PC-3 (cell line): ENCODE measurements at regions of chr4 and their contacts with region 1.

Region 1: DNA sequence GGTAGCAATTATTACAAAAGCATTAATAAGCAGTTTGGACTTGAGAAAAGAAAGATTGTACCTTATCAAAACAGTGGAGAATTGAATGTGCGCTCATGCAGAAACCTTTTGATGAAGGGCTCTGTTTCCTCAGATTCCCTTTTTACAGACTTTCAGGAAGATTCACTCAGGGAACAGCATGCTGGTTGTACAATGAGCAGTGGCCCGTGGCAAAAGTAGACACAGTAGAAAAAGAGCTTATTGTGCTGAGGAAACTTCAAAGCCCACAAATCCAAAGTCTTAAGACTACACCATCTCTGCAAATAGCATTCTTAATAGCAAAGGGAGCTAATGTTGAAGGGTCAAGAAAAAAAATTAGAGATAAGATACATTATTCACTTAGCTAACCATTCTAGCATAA is 858.9 kb downstream of the PDHA2 start:
- DNase-seq: no peak
- ATAC-seq: no peak
- H3K4me3 ChIP-seq: no peak overlapping the region
- H3K27ac ChIP-seq: no peak overlapping the region
- H3K4me1 ChIP-seq: no peaks in the 10 kb centered on the region
- H3K27me3 ChIP-seq: no peaks in the 10 kb centered on the region
- CTCF ChIP-seq: no peak

Region 2: DNA sequence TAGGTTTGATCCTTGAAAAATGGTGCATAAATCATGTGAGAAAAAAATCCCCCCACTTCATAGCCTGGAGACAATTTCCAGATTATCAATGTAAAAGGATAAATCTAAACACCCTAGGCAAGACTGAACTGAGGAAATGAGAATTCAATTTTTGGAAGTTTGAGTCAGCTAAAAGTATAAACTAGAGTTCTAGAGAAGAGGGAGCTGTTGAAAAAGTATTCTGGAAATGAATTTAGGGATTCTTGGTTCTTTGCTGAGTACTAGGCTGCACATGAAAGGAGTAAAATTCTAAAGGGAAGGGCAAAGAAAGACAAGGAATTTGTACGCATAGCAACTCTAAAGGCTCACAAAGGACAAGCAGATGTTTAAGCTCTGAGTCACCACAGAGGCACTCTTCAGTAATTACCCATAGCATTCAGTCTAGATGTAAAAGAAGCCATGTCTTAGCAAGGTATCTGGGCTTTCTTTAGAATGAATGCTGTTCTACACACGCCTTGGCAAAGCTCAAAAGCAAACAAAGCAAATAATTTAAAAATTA is 37.6 kb after region 1 on chr4:
- CTCF ChIA-PET with region 1: no interaction called
- POLR2A ChIA-PET with region 1: no interaction called
- intact Hi-C with region 1: no loop called
- DNase-seq: peak; percentile 62
- ATAC-seq: peak; percentile 97
- H3K4me3 ChIP-seq: no peak overlapping the region
- H3K27ac ChIP-seq: no peak overlapping the region
- H3K4me1 ChIP-seq: peaks cover 4% of the 10 kb centered on the region
- H3K27me3 ChIP-seq: no peaks in the 10 kb centered on the region
- CTCF ChIP-seq: no peak

Region 3: DNA sequence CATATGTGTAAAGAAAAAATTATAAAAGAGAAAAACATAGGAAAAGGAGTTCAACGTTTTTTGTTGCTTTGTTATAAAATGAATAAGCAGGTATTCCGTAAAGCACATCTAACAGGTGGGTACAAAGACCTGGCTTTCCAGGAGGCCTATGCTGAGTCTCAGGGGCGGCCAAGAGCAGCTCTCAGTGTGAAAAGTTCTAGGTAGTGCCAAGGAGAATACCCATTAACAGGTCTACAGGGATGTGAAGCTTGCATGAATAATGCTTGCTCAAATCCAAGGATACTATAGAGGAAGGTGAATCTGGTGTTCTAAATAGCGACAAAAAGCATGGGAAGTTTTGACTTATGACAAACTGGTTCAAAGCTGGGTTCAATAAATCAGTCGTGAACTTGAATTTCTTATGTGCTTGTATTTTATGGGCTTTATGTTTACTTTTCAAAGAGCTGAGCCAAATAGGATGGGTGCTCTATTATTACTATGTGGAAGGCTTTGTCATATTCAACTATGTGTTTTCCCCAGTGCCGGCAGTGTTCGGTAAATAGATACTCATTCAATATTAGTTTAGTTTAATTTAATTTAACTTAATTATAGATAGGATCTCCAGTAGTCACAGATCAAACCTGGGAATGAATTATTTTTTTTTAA is 85.7 kb after region 1 on chr4:
- CTCF ChIA-PET with region 1: no interaction called
- POLR2A ChIA-PET with region 1: no interaction called
- intact Hi-C with region 1: no loop called
- DNase-seq: no peak
- ATAC-seq: no peak
- H3K4me3 ChIP-seq: no peak overlapping the region
- H3K27ac ChIP-seq: no peak overlapping the region
- H3K4me1 ChIP-seq: no peaks in the 10 kb centered on the region; the same call in 1 of the 2 replicates
- H3K27me3 ChIP-seq: no peaks in the 10 kb centered on the region
- CTCF ChIP-seq: no peak

Region 4: DNA sequence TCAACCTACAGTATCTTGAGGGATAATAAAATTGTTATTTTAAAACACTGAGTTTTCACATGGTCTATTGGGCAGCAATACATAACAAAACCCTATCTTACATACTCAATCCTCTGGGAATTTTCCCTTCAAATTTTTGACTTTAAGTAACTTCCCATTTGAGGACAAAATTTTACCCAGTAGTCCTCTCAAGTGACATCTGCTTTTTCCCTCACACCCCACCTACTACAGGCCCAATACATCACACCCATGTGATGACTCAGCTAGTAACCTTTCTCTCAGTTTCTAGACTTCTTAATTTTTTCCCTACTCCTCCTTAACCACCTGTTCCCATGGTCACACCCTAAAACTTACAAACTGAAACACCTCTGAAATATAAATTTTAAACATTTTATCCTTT is 1550.1 kb after region 1 on chr4:
- CTCF ChIA-PET with region 1: no interaction called
- POLR2A ChIA-PET with region 1: interaction called, 15 read pairs
- intact Hi-C with region 1: no loop called
- DNase-seq: no peak
- ATAC-seq: no peak
- H3K4me3 ChIP-seq: no peak overlapping the region
- H3K27ac ChIP-seq: no peak overlapping the region
- H3K4me1 ChIP-seq: no peaks in the 10 kb centered on the region
- H3K27me3 ChIP-seq: no peaks in the 10 kb centered on the region
- CTCF ChIP-seq: no peak